ENCODE measurements at regions of chr11 and their contacts with region 1.

Region 1: DNA sequence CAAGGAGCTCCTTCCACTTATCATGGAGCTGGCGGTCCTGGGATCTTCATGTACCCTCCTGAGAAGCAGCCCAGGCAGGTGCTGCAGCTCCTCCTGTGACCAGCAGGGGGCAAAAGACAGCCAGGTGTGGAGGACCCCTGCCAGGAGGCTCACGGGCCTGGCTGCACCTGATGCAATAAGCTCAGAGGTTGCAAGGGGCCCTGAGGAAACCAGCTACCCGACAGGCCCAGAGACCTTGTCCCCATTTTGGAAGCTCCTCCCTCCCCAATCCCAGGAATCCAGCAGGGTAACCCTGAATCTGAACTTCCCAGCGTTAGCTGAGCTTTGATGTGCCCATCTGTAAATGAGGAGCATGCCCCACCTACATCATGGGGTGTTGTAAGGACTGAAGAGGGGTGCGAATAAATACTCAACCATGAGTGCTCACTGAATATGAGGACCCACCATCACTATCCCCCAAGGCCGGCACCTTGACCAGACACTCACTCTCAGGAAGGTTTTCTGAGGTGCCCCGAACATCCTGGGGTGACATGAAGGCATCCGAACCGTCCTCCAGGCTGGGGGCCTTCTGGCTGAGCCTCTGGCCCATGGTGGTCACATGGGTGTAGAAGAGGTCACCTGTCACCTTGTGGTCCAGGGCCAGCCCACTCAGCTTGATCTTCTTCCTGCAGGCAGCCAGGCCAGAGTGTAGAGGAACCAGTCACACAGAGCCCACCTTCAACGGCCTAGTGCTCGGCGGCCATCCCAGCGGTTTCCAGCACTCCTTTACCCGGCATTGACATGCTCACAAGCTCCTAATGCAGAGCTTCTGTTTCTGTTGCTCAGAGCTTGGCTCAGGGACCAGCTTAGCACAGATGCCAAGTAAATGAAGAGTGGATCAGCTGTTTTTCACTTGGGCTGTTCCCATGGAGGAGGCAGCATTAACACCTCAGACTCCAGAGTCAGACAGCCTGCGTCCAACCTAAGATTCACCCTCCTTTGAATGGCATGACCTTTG is 21.7 kb downstream of the SLC43A1 start:
- DNase-seq: no peak
- ATAC-seq: peak; percentile 94
- H3K4me3 ChIP-seq: no peak overlapping the region
- H3K27ac ChIP-seq: no peak overlapping the region
- H3K4me1 ChIP-seq: no peaks in the 10 kb centered on the region
- H3K27me3 ChIP-seq: no peaks in the 10 kb centered on the region
- CTCF ChIP-seq: peak; percentile 86 to 97 (median 91)
- EP300 ChIP-seq: no peak
- POLR2A ChIP-seq: no peak
- RAD21 ChIP-seq: peak; percentile 69

Region 2: GRCh38 chr11:57031556-57031955 is 462.2 kb before region 1 on chr11:
- CTCF ChIA-PET with region 1: no interaction called
- POLR2A ChIA-PET with region 1: no interaction called
- RAD21 ChIA-PET with region 1: no interaction called
- SMC1A ChIA-PET with region 1: no interaction called
- in situ Hi-C with region 1: no loop called
- intact Hi-C with region 1: no loop called
- DNase-seq: no peak
- ATAC-seq: no peak
- H3K4me3 ChIP-seq: no peak overlapping the region
- H3K27ac ChIP-seq: no peak overlapping the region
- H3K4me1 ChIP-seq: no peaks in the 10 kb centered on the region
- H3K27me3 ChIP-seq: no peaks in the 10 kb centered on the region
- CTCF ChIP-seq: no peak
- EP300 ChIP-seq: no peak
- POLR2A ChIP-seq: no peak
- RAD21 ChIP-seq: no peak

Region 3: DNA sequence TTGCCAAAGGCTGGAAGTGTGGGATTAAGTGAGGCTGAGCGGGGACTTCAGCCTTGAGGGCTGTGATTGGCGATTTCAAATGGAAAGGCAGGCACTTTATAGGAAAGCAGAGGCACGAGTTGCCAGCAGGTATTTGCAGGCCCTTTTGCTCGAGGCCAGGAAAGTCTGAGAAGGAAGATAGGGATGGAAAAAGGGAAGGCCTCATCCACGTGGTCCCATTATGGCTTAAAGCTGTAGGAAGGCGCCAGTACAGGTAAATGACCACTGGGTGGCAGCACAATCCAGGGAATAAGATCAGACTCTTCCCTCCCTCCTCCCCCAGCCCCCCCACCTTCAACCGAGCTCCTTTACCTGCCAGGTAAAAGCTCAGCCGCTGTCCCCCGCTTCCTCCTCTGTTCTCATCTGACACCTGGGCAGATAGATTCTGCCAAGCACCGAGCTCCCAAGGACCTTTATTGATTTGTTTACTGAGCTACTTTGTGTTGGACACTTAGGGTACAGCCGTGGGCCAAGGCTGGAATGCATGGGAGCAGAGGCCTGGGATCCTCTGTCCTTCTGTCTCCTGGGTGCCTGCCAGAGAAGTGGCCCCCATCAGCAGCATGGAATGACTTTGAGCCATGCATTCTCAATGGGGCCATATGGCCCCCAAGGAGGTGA is 148.1 kb before region 1 on chr11:
- CTCF ChIA-PET with region 1: interaction called, 41 read pairs
- POLR2A ChIA-PET with region 1: no interaction called
- RAD21 ChIA-PET with region 1: interaction called, 7 read pairs
- SMC1A ChIA-PET with region 1: interaction called, 7 read pairs
- in situ Hi-C with region 1: no loop called
- intact Hi-C with region 1: no loop called
- DNase-seq: no peak
- ATAC-seq: peak; percentile 83
- H3K4me3 ChIP-seq: no peak overlapping the region
- H3K27ac ChIP-seq: no peak overlapping the region
- H3K4me1 ChIP-seq: no peaks in the 10 kb centered on the region; the same call in 1 of the 2 replicates
- H3K27me3 ChIP-seq: peaks cover 0 to 4% of the 10 kb centered on the region in 2 experiments; a peak in 1 of 4 replicates
- CTCF ChIP-seq: peak; percentile 66 to 77 (median 75); a peak in 5 of 6 replicates
- EP300 ChIP-seq: no peak
- POLR2A ChIP-seq: no peak
- RAD21 ChIP-seq: peak; percentile 76

Region 4: GRCh38 chr11:57480409-57481137 is 13.2 kb before region 1 on chr11:
- CTCF ChIA-PET with region 1: interaction called, 59 read pairs
- POLR2A ChIA-PET with region 1: no interaction called
- RAD21 ChIA-PET with region 1: interaction called, 4 read pairs
- SMC1A ChIA-PET with region 1: interaction called, 4 read pairs
- in situ Hi-C with region 1: no loop called
- intact Hi-C with region 1: no loop called
- DNase-seq: no peak
- ATAC-seq: peak; percentile 48
- H3K4me3 ChIP-seq: no peak overlapping the region
- H3K27ac ChIP-seq: no peak overlapping the region
- H3K4me1 ChIP-seq: peaks cover 26% of the 10 kb centered on the region
- H3K27me3 ChIP-seq: no peaks in the 10 kb centered on the region
- CTCF ChIP-seq: peak; percentile 71 to 91 (median 86)
- EP300 ChIP-seq: no peak
- POLR2A ChIP-seq: no peak
- RAD21 ChIP-seq: peak; percentile 59

Region 5: GRCh38 chr11:57515332-57516060 is 21.7 kb after region 1 on chr11 and contains the start of gene SLC43A1:
- CTCF ChIA-PET with region 1: interaction called, 158 read pairs
- POLR2A ChIA-PET with region 1: interaction called, 3 read pairs
- RAD21 ChIA-PET with region 1: interaction called, 46 read pairs
- SMC1A ChIA-PET with region 1: interaction called, 47 read pairs
- in situ Hi-C with region 1: no loop called
- intact Hi-C with region 1: no loop called
- DNase-seq: no peak
- ATAC-seq: peak; percentile 66
- H3K4me3 ChIP-seq: peak within 1 kb of the TSS; percentile 90
- H3K27ac ChIP-seq: peak within 1 kb of the TSS; percentile 35
- H3K4me1 ChIP-seq: no peaks in the 10 kb centered on the region
- H3K27me3 ChIP-seq: no peaks in the 10 kb centered on the region
- CTCF ChIP-seq: no peak
- EP300 ChIP-seq: no peak
- POLR2A ChIP-seq: peak; percentile 25; the same call in 1 of the 2 replicates
- RAD21 ChIP-seq: no peak
- polyA plus RNA-seq, gene SLC43A1: 1.0 to 2.4 TPM

Region 6: DNA sequence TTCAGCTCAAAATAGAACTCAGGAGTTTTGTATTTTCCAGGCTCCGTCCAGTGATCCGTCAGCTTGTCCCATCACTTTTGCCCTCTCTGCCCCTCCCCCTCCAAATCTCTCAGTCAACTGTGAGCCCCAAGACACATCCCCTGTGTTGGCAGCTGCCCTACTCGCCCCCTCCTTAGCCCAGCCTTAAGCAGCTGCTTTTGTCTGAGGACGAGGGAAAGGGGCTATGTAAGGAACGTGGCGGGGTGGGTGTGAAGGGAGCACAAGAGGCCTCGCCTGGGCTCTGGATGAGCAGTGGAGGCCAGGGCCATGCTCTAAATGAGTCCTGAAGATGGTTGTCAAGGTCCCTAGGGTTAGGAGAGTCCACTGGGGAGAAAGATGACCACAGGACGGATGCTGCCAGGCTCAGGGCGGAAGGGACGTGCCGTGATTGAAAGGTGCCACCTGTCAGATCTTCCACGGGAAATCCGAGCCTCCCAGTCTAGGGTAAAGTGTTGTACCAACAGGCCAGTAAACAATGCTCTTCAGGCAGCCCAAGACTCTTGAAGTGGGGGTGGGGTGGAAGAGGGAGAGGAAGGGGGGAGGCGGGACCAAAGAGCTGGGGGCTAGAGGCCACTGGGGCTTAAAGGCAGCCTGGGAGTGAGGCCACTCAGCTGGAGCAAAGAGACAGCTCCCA is 43.3 kb after region 1 on chr11 and contains the start of gene SMTNL1:
- CTCF ChIA-PET with region 1: interaction called, 396 read pairs
- POLR2A ChIA-PET with region 1: no interaction called
- RAD21 ChIA-PET with region 1: interaction called, 133 read pairs
- SMC1A ChIA-PET with region 1: interaction called, 4 read pairs
- in situ Hi-C with region 1: no loop called
- intact Hi-C with region 1: no loop called
- DNase-seq: no peak
- ATAC-seq: no peak
- H3K4me3 ChIP-seq: no peak within 1 kb of the TSS
- H3K27ac ChIP-seq: no peak within 1 kb of the TSS
- H3K4me1 ChIP-seq: no peaks in the 10 kb centered on the region
- H3K27me3 ChIP-seq: no peaks in the 10 kb centered on the region
- CTCF ChIP-seq: no peak
- EP300 ChIP-seq: no peak
- POLR2A ChIP-seq: no peak
- RAD21 ChIP-seq: no peak
- polyA plus RNA-seq, gene SMTNL1: 0.06 TPM in 1 of 2 experiments, not detected in the other

Region 7: GRCh38 chr11:57567515-57568329 is 73.9 kb after region 1 on chr11 and contains the start of gene UBE2L6:
- CTCF ChIA-PET with region 1: interaction called, 10 read pairs
- POLR2A ChIA-PET with region 1: no interaction called
- RAD21 ChIA-PET with region 1: no interaction called
- SMC1A ChIA-PET with region 1: interaction called, 5 read pairs
- in situ Hi-C with region 1: no loop called
- intact Hi-C with region 1: no loop called
- DNase-seq: no peak
- ATAC-seq: peak; percentile 84
- H3K4me3 ChIP-seq: peak within 1 kb of the TSS; percentile 100
- H3K27ac ChIP-seq: peak within 1 kb of the TSS; percentile 87
- H3K4me1 ChIP-seq: peaks cover 4% of the 10 kb centered on the region
- H3K27me3 ChIP-seq: no peaks in the 10 kb centered on the region
- CTCF ChIP-seq: peak in 2 of 3 experiments; percentile 43 to 66; a peak in 3 of 6 replicates
- EP300 ChIP-seq: no peak
- POLR2A ChIP-seq: peak; percentile 59
- RAD21 ChIP-seq: no peak
- polyA plus RNA-seq, gene UBE2L6: 262 to 295 TPM

Region 8: DNA sequence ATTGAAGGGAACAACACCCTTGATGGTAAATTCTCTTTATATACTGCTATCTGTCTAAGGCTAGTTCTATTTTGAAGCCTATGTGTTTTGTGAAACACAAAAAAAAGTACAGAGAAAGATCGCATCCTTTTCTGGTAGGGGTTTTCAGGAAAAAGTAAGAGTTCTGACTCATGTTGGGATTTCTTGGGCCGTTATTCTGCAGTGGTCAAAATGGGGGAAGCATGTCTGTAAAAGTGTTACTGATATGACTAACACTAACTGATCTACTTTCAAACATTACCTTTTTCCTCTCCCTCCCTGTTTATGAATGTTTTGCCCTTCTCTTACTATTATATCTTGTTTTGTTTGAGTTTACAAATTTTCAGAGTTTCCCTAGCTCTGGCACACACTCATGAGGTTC is 321.7 kb after region 1 on chr11:
- CTCF ChIA-PET with region 1: no interaction called
- POLR2A ChIA-PET with region 1: no interaction called
- RAD21 ChIA-PET with region 1: no interaction called
- SMC1A ChIA-PET with region 1: no interaction called
- in situ Hi-C with region 1: no loop called
- intact Hi-C with region 1: no loop called
- DNase-seq: no peak
- ATAC-seq: peak; percentile 82
- H3K4me3 ChIP-seq: no peak overlapping the region
- H3K27ac ChIP-seq: peak overlapping the region; percentile 51
- H3K4me1 ChIP-seq: peaks cover 10% of the 10 kb centered on the region; the same call in 1 of the 2 replicates
- H3K27me3 ChIP-seq: no peaks in the 10 kb centered on the region
- CTCF ChIP-seq: no peak
- EP300 ChIP-seq: peak in 1 of 2 experiments; percentile 52; a peak in 1 of 4 replicates
- POLR2A ChIP-seq: no peak
- RAD21 ChIP-seq: no peak

Region 9: GRCh38 chr11:58024601-58025091 is 530.8 kb after region 1 on chr11:
- CTCF ChIA-PET with region 1: no interaction called
- POLR2A ChIA-PET with region 1: no interaction called
- RAD21 ChIA-PET with region 1: no interaction called
- SMC1A ChIA-PET with region 1: no interaction called
- in situ Hi-C with region 1: no loop called
- intact Hi-C with region 1: no loop called
- DNase-seq: no peak
- ATAC-seq: no peak
- H3K4me3 ChIP-seq: no peak overlapping the region
- H3K27ac ChIP-seq: no peak overlapping the region
- H3K4me1 ChIP-seq: no peaks in the 10 kb centered on the region
- H3K27me3 ChIP-seq: no peaks in the 10 kb centered on the region
- CTCF ChIP-seq: no peak
- EP300 ChIP-seq: no peak
- POLR2A ChIP-seq: no peak
- RAD21 ChIP-seq: no peak

Measured in GM12878 (cell line).